T-cell (primary cell): ENCODE measurements at regions of chr17 and their contacts with region 1.

Region 1: GRCh38 chr17:42554250-42555121 is 1.8 kb downstream of the HSD17B1 start:
- DNase-seq: peak; percentile 49 to 84 (median 69)
- ATAC-seq: peak; percentile 87 to 92 (median 91)
- H3K4me3 ChIP-seq: peak overlapping the region; percentile 69 to 83
- H3K4me3 Mint-ChIP-seq: peak overlapping the region; percentile 84 to 91 (median 87)
- H3K27ac ChIP-seq: peak overlapping the region; percentile 92
- H3K27ac Mint-ChIP-seq: peak overlapping the region; percentile 91 to 93
- H3K4me1 ChIP-seq: peaks cover 3 to 36% of the 10 kb centered on the region in 2 experiments
- H3K4me1 Mint-ChIP-seq: peaks cover 21 to 31% (median 21%) of the 10 kb centered on the region in 3 donors
- H3K27me3 ChIP-seq: no peaks in the 10 kb centered on the region
- H3K27me3 Mint-ChIP-seq: no peaks in the 10 kb centered on the region

Region 2: DNA sequence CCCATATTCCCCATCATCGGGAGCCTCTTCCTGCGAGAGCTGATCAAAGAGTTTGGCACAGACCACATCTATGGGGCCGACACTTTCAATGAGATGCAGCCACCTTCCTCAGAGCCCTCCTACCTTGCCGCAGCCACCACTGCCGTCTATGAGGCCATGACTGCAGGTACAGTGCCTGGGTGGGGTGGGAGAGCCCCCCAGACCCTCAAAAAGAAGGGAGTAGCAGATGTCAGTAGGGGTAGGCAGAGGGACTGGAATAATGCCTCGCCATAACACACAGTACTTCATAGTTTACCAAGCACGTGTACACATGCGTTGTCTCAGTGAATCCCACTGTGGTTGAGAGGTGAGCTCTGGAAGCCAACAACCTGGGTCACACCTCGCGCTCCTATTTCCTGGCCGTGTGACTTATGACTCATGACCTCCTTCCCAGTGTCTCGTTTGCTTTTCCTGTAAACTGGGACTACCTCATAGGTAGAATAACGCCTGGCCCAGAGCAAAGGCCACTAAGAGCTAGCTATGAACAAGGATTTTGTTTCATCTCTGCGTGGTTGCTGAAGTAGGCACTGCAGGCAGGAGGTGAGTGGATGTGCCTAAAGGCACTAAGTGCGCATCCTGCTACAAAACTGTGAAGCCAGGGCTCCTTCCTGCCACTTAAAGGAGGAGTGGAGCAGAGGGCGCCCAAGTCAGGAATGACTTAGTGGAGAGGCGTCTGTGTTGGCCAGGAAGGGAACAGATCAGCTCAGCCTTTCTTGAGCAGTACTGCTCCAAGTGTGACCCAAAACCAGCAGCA is 13.2 kb before region 1 on chr17:
- CTCF ChIA-PET with region 1: interaction called in 1 of 2 experiments, 3 read pairs
- POLR2A ChIA-PET with region 1: interaction called in 1 of 2 experiments, 14 read pairs
- DNase-seq: peak in 4 of 35 experiments; percentile 27 to 44 (median 27)
- ATAC-seq: peak in 3 of 4 experiments; percentile 18 to 49 (median 38)
- H3K4me3 ChIP-seq: no peak overlapping the region
- H3K4me3 Mint-ChIP-seq: peak overlapping the region in 1 of 3 donors; percentile 53
- H3K27ac ChIP-seq: peak overlapping the region; percentile 19
- H3K27ac Mint-ChIP-seq: peak overlapping the region; percentile 58 to 83
- H3K4me1 ChIP-seq: peaks cover 10 to 34% of the 10 kb centered on the region in 2 experiments
- H3K4me1 Mint-ChIP-seq: peaks cover 28 to 35% (median 33%) of the 10 kb centered on the region in 3 donors
- H3K27me3 ChIP-seq: no peaks in the 10 kb centered on the region
- H3K27me3 Mint-ChIP-seq: no peaks in the 10 kb centered on the region